A549 (cell line): ENCODE measurements at regions of chr6 and their contacts with region 1.

Region 1: DNA sequence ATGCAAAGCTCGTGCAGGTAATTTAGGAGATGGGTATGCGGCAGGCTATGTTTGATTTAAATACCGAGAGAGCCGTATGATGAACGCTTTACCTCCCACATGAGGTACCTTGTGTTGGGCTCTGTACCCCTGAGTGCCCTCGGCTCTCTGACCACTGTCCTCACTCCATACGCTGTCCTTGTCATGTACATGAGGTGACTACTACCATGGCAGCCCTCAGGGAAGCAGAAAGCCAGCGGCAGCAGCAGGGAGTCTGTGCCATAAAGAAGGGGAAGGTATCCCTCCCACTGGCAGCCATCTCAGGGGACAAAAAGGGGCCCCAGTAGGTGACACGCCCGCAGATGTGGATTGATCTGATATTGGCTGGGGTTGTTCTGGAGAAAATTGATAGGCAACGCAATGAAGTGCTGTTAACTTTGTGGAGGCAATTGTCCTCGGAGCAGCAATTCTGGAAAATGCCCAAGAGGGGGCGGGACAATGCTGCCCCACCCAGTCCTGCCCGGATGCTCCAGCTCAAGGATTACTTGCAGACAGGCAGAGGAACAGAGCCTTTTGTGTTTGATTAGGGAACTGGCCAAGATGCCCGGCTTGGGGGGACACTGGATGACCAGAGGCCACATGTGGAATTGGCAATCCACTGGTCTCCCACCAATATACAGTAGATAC is 38.0 kb upstream of the HSF2 start:
- DNase-seq: no peak
- ATAC-seq: no peak
- H3K4me3 ChIP-seq: no peak overlapping the region
- H3K27ac ChIP-seq: no peak overlapping the region
- H3K4me1 ChIP-seq: no peaks in the 10 kb centered on the region
- CTCF ChIP-seq: no peak
- EP300 ChIP-seq: no peak
- POLR2A ChIP-seq: no peak
- RAD21 ChIP-seq: no peak

Region 2: GRCh38 chr6:122339661-122340060 is 21.8 kb before region 1 on chr6:
- CTCF ChIA-PET with region 1: no interaction called
- POLR2A ChIA-PET with region 1: interaction called, 11 read pairs
- DNase-seq: no peak
- ATAC-seq: no peak
- H3K4me3 ChIP-seq: no peak overlapping the region
- H3K27ac ChIP-seq: no peak overlapping the region
- H3K4me1 ChIP-seq: no peaks in the 10 kb centered on the region
- CTCF ChIP-seq: no peak
- EP300 ChIP-seq: no peak
- POLR2A ChIP-seq: no peak
- RAD21 ChIP-seq: no peak